Transverse colon (tissue), 4 donors: ENCODE measurements at regions of chr14 and their contacts with region 1.

Region 1: DNA sequence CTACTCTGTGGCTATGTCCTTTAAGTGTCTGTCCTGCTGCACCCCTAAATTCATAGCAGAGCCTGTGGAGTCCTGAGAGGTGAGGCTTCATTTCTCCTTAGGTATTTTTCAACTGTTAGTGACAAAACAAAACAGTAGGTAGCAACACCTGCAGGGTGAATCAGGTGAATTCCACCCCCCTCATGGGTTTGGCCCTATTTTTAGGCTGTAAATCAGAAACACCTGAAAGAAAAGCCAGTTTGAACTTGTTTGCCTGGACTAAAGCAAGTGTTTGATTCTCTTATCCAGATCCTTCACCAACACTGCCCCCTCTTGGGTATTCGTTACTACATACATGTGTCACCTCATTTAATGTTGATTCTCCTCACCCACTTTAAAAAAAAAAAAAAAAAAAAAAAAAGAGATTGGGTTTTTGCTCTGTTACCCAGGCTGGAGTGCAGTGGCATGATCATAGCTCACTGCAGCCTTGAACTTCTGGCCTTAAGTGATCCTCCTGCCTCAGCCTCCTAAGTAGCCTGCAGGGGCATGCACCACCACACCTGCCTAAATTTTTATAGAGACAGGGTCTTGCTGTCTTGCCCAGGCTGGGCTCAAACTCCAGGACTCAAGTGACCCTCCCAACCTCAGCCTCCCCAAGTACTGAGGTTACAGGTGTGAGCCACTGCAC is 10.3 kb downstream of the TBPL2 start:
- DNase-seq: peak; percentile 36
- H3K4me3 ChIP-seq: no peak overlapping the region
- H3K27ac ChIP-seq: no peak overlapping the region
- H3K4me1 ChIP-seq: peaks cover 0 to 22% (median 6%) of the 10 kb centered on the region in 4 donors
- H3K27me3 ChIP-seq: no peaks in the 10 kb centered on the region
- CTCF ChIP-seq: peak; percentile 34 to 58 (median 36)
- EP300 ChIP-seq: no peak
- POLR2A ChIP-seq: no peak

Region 2: DNA sequence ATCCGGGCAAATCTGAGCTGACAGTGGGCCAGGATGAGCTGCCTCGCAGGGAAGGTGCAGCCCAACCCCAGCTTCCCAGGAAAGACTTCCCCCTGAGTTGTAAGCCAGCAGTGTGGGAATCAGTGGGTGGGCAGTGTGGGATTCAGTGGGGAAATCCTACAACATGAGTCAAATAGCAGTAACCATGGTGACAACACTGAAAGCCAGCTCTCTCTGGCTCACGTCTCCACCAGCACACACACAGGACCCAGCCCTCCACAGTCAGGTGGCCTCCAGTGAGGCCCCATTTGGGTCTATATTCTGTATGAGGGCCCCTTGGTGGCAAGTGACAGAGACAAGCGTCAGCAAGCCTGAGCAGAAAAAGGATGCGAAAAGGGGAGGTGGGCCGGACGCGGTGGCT is 307.1 kb before region 1 on chr14:
- in situ Hi-C with region 1: no loop called
- intact Hi-C with region 1: no loop called
- DNase-seq: no peak
- H3K4me3 ChIP-seq: no peak overlapping the region
- H3K27ac ChIP-seq: peak overlapping the region; percentile 93 to 99 (median 98)
- H3K4me1 ChIP-seq: peaks cover 22 to 97% (median 64%) of the 10 kb centered on the region in 4 donors
- H3K27me3 ChIP-seq: no peaks in the 10 kb centered on the region
- CTCF ChIP-seq: no peak
- EP300 ChIP-seq: no peak
- POLR2A ChIP-seq: no peak

Region 3: DNA sequence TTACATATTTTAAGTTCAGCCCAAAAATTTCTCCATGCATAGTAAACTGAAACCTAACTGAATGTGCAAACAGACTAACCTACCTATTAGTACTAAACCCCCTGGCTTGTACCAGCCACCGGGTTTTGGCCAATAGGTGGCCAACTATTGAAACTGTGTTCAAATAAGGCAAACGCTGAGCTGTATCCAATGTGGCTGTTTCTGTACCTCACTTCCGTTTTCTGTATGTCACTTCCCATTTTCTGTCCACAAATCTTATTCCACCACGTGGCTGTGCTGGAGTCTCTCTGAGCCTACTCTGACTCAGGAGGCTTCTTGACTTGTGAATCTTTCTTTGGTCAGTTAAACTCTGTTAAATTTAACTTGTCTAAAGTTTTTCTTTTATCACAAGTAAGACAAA is 165.0 kb before region 1 on chr14:
- in situ Hi-C with region 1: loop called in 1 of 4 experiments (anchors 10 kb)
- intact Hi-C with region 1: no loop called
- DNase-seq: no peak
- H3K4me3 ChIP-seq: no peak overlapping the region
- H3K27ac ChIP-seq: no peak overlapping the region
- H3K4me1 ChIP-seq: no peaks in the 10 kb centered on the region
- H3K27me3 ChIP-seq: no peaks in the 10 kb centered on the region
- CTCF ChIP-seq: no peak
- EP300 ChIP-seq: no peak
- POLR2A ChIP-seq: no peak

Region 4: GRCh38 chr14:55354500-55354899 is 75.7 kb before region 1 on chr14:
- in situ Hi-C with region 1: no loop called
- intact Hi-C with region 1: no loop called
- DNase-seq: peak; percentile 69
- H3K4me3 ChIP-seq: no peak overlapping the region
- H3K27ac ChIP-seq: peak overlapping the region; percentile 13 to 71 (median 54)
- H3K4me1 ChIP-seq: peaks cover 0 to 40% (median 12%) of the 10 kb centered on the region in 4 donors
- H3K27me3 ChIP-seq: no peaks in the 10 kb centered on the region
- CTCF ChIP-seq: peak; percentile 47 to 80 (median 60)
- EP300 ChIP-seq: no peak
- POLR2A ChIP-seq: no peak

Region 5: DNA sequence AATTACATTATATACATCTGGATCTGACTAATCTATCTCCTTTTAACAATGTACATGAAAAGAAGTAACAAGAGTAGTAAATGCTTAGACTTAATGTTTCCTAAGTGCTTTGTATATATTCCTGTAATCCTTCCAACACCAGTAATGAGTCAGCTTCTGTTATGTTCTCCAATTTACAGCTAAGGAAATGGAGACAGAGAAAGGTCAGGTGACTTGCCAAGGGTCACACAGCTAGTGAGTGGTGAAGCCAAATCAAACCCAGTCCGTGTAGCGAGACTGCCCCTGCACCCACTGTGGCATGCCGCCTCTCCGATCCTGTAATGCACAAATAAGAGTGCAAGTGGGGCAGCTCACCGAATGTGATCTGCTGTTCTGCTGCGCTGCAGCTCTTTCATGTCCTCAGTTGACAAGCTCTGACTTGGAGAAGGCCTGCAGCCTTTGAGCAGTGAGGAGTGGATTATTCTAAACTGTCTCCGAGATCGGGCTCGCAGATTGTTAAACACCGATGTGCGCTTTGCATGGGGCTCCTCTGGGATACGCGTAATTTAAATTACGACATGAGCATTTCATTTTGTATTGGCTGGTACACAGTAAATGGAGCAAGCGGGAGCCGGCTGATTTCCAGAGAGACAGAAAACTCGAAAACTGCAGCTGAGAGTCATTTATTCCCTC is 84.8 kb after region 1 on chr14:
- in situ Hi-C with region 1: no loop called
- intact Hi-C with region 1: no loop called
- DNase-seq: no peak
- H3K4me3 ChIP-seq: no peak overlapping the region
- H3K27ac ChIP-seq: peak overlapping the region in 1 of 4 donors; percentile 24
- H3K4me1 ChIP-seq: no peaks in the 10 kb centered on the region
- H3K27me3 ChIP-seq: no peaks in the 10 kb centered on the region
- CTCF ChIP-seq: no peak
- EP300 ChIP-seq: no peak
- POLR2A ChIP-seq: no peak

Region 6: GRCh38 chr14:55609681-55610080 is 179.5 kb after region 1 on chr14:
- in situ Hi-C with region 1: no loop called
- intact Hi-C with region 1: no loop called
- DNase-seq: no peak
- H3K4me3 ChIP-seq: no peak overlapping the region
- H3K27ac ChIP-seq: no peak overlapping the region
- H3K4me1 ChIP-seq: peaks cover 2 to 47% (median 10%) of the 10 kb centered on the region in 4 donors
- H3K27me3 ChIP-seq: no peaks in the 10 kb centered on the region
- CTCF ChIP-seq: no peak
- EP300 ChIP-seq: no peak
- POLR2A ChIP-seq: no peak